GM12878 (cell line): ENCODE measurements at regions of chr14 and their contacts with region 1.

Region 1: DNA sequence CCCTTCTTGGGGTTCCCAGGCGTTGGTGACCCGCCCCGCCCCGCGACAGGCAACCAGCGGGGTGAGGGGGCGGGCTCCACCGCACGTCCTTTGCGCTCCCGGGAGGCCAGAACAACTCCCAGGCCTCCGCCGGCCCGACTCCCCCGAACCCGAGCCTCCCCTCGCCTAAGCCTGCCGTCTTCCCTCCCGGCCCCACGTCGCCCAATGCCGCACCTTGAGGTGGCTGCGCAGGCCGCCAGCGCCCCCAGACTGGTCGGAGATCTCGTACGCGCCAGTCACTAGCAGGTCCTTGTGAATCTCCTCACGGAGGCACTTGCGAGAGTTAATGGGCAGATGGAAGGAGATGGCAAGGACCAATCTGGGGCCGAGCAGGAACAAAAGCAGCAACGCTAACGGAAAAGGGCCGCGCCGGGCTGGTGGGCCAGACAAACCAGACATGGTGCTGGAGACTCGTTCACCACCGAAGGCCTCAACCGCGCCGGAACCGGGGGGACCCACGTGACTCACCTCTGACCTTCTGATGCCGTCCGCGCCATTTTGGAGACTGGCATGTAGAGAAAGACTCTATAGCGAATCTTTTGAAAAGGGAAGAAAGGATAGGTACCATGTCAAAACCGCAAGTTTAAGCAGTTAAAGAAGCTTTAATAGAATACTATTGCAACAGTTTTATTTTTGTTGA is at the start of gene TMED10:
- DNase-seq: no peak
- ATAC-seq: peak; percentile 89
- H3K4me3 ChIP-seq: peak within 1 kb of the TSS; percentile 80
- H3K27ac ChIP-seq: peak within 1 kb of the TSS; percentile 99
- H3K4me1 ChIP-seq: no peaks in the 10 kb centered on the region; the same call in 1 of the 2 replicates
- H3K27me3 ChIP-seq: no peaks in the 10 kb centered on the region
- CTCF ChIP-seq: peak in 1 of 3 experiments; percentile 12; a peak in 1 of 6 replicates
- EP300 ChIP-seq: 0 out of 4 replicates have a peak, but pooled peaks of 1 of the 2 experiments have one; percentile 11
- POLR2A ChIP-seq: peak; percentile 92
- RAD21 ChIP-seq: no peak; the same call in 1 of the 2 replicates
- polyA plus RNA-seq, gene TMED10: 150 to 270 TPM

Region 2: DNA sequence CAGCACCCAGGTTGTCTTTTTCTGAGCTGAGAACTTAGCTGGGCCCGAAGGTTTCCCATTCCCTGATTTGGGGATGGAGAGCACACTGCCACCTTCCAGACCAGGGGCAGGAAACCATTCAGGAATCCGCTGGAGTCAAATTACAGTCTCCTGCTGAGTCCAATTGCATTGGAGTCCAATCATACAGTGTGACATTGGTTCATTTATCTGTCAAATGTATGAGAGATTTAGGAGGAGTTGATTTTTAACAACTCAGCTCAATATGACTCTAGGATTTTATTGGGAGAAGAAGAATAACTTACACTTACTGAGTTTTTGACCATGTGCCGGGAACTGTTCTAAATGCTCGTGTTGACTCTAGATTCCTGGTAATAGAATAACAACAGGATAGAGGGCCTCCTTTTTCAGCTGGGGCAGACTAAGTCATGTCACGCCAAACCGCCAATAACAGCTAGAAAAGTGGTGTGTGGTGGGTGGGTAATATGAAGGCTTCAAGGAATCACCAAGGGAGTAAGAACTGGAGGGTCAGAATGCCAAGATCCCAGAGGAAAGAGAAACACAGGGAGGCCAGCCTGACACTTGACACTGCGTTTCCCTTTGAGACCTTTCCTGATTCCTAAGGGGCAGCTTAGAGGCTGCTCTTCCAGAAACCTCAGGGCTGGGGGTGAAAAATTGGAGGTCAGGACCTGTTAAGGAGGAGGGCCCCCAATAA is 761.7 kb before region 1 on chr14:
- CTCF ChIA-PET with region 1: no interaction called
- POLR2A ChIA-PET with region 1: no interaction called
- RAD21 ChIA-PET with region 1: no interaction called
- SMC1A ChIA-PET with region 1: no interaction called
- in situ Hi-C with region 1: no loop called
- intact Hi-C with region 1: no loop called
- DNase-seq: no peak
- ATAC-seq: no peak
- H3K4me3 ChIP-seq: no peak overlapping the region
- H3K27ac ChIP-seq: no peak overlapping the region
- H3K4me1 ChIP-seq: no peaks in the 10 kb centered on the region
- H3K27me3 ChIP-seq: peaks cover 0 to 5% of the 10 kb centered on the region in 2 experiments; a peak in 2 of 4 replicates
- CTCF ChIP-seq: no peak
- EP300 ChIP-seq: no peak
- POLR2A ChIP-seq: no peak
- RAD21 ChIP-seq: no peak

Region 3: DNA sequence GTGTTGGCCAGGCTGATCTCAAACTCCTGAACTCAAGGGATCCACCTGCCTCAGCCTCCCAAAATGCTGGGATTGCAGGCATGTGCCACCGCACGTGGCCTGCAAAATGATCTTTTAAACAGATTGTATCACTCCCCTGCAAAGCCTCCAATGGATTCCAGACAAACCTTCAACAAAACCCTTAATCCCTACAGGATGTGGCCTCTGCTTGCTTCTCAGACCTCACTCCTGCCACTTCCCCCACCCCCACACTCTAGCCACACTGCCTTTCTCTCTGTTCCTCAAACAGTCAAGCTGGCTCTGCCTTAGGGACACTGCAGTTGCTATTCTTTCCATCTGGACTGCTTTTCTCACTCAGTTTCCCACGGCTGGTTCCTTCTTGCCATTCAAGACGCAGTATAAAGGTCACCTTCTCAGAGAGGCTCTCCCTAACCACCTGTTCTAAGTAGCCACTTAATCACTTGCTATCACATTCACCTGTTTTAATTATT is 47.4 kb after region 1 on chr14:
- CTCF ChIA-PET with region 1: interaction called, 8 read pairs
- POLR2A ChIA-PET with region 1: interaction called, 6 read pairs
- RAD21 ChIA-PET with region 1: no interaction called
- SMC1A ChIA-PET with region 1: interaction called, 5 read pairs
- in situ Hi-C with region 1: no loop called
- intact Hi-C with region 1: loop called (anchors 5 kb)
- DNase-seq: peak; percentile 75
- ATAC-seq: peak; percentile 73
- H3K4me3 ChIP-seq: no peak overlapping the region
- H3K27ac ChIP-seq: no peak overlapping the region; the same call in none of the 2 replicates
- H3K4me1 ChIP-seq: peaks cover 38% of the 10 kb centered on the region
- H3K27me3 ChIP-seq: no peaks in the 10 kb centered on the region; a peak in 1 of 4 replicates
- CTCF ChIP-seq: no peak
- EP300 ChIP-seq: peak in 1 of 2 experiments; percentile 72; a peak in 2 of 4 replicates
- POLR2A ChIP-seq: no peak
- RAD21 ChIP-seq: no peak